ENCODE measurements at regions of chr3 and their contacts with region 1.

Region 1: GRCh38 chr3:35224565-35225280 is 414.6 kb upstream of the ARPP21 start:
- DNase-seq: no peak
- H3K4me3 ChIP-seq: no peak overlapping the region
- H3K27ac ChIP-seq: no peak overlapping the region
- H3K4me1 ChIP-seq: no peaks in the 10 kb centered on the region
- H3K27me3 ChIP-seq: no peaks in the 10 kb centered on the region
- CTCF ChIP-seq: no peak
- EP300 ChIP-seq: no peak
- POLR2A ChIP-seq: no peak

Region 2: GRCh38 chr3:35198857-35199256 is 25.9 kb before region 1 on chr3:
- in situ Hi-C with region 1: no loop called
- intact Hi-C with region 1: loop called (anchors 2 kb)
- DNase-seq: no peak
- H3K4me3 ChIP-seq: no peak overlapping the region
- H3K27ac ChIP-seq: no peak overlapping the region
- H3K4me1 ChIP-seq: no peaks in the 10 kb centered on the region
- H3K27me3 ChIP-seq: no peaks in the 10 kb centered on the region
- CTCF ChIP-seq: no peak
- EP300 ChIP-seq: no peak
- POLR2A ChIP-seq: no peak